ENCODE measurements at regions of chr9 and their contacts with region 1.

Region 1: GRCh38 chr9:35923927-35924763 is 14.9 kb downstream of the SPAAR start:
- DNase-seq: no peak
- ATAC-seq: no peak
- H3K4me3 Mint-ChIP-seq: no peak overlapping the region
- H3K27ac Mint-ChIP-seq: no peak overlapping the region
- H3K4me1 Mint-ChIP-seq: no peaks in the 10 kb centered on the region
- H3K27me3 Mint-ChIP-seq: peaks cover 6% of the 10 kb centered on the region

Region 2: GRCh38 chr9:35910613-35911359 is 13.4 kb before region 1 on chr9:
- CTCF ChIA-PET with region 1: interaction called, 13 read pairs
- POLR2A ChIA-PET with region 1: no interaction called
- DNase-seq: peak; percentile 64
- ATAC-seq: peak; percentile 63
- H3K4me3 Mint-ChIP-seq: peak overlapping the region; percentile 20
- H3K27ac Mint-ChIP-seq: peak overlapping the region; percentile 92
- H3K4me1 Mint-ChIP-seq: peaks cover 42% of the 10 kb centered on the region
- H3K27me3 Mint-ChIP-seq: no peaks in the 10 kb centered on the region

Region 3: DNA sequence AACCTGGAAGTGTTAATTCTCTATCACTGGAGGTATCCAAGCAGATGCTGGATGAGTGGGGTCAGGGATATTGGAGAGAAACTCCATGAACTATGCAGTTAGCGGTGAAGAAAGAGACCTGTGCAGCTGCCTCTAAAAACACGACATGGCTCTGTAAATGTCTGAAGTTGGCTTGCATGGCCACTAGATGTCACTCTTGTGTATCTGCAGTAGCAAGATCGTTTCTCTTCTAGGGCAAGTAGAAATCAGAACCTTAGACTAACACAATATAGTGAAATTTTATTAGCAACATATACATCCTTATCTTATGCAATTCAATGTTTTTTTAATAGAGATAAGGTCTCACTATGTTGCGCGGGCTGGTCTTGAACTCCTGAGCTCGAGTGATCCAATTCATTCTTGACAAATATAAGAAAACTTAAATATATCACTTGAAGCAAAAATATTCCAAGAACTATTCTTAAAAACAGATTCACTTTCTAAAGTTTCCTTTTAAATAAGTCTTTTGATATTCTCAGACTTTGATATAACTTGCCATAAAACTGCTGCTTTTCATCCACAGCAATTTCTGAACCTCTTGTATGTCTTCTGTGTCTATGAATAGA is 30.9 kb after region 1 on chr9:
- CTCF ChIA-PET with region 1: interaction called, 10 read pairs
- POLR2A ChIA-PET with region 1: no interaction called
- DNase-seq: peak; percentile 69
- ATAC-seq: peak; percentile 79
- H3K4me3 Mint-ChIP-seq: no peak overlapping the region
- H3K27ac Mint-ChIP-seq: no peak overlapping the region
- H3K4me1 Mint-ChIP-seq: no peaks in the 10 kb centered on the region
- H3K27me3 Mint-ChIP-seq: peaks cover 19% of the 10 kb centered on the region

Region 4: DNA sequence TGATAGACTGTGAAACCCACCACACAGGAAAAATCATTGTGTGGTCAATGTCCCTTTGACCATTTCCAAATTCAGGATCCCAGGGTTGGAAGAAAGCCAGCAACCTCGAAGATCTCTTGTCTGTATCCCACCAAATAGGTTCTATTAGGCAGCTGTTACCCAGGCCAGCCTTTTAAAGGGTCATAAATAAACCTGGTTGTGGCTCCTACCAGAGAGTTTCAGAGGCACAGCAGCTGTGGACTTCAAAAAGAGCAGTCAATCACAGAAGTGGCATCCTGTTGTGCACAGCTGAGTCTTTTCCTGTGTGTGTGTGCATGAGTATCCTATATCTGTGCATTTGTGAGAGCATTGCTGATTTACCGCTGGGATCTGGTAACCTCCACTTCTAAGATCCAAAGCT is 57.6 kb after region 1 on chr9:
- CTCF ChIA-PET with region 1: no interaction called
- POLR2A ChIA-PET with region 1: no interaction called
- DNase-seq: no peak
- ATAC-seq: no peak
- H3K4me3 Mint-ChIP-seq: no peak overlapping the region
- H3K27ac Mint-ChIP-seq: no peak overlapping the region
- H3K4me1 Mint-ChIP-seq: peaks cover 4% of the 10 kb centered on the region
- H3K27me3 Mint-ChIP-seq: peaks cover 45% of the 10 kb centered on the region

Measured in activated CD8-positive, alpha-beta T cell treated with anti-CD3 and anti-CD28 coated beads, Interleukin-2, amount 10 ng/mL, durations not matched to agents 7 days and 5 days (primary cell).